ENCODE measurements at regions of chr17 and their contacts with region 1.

Region 1: DNA sequence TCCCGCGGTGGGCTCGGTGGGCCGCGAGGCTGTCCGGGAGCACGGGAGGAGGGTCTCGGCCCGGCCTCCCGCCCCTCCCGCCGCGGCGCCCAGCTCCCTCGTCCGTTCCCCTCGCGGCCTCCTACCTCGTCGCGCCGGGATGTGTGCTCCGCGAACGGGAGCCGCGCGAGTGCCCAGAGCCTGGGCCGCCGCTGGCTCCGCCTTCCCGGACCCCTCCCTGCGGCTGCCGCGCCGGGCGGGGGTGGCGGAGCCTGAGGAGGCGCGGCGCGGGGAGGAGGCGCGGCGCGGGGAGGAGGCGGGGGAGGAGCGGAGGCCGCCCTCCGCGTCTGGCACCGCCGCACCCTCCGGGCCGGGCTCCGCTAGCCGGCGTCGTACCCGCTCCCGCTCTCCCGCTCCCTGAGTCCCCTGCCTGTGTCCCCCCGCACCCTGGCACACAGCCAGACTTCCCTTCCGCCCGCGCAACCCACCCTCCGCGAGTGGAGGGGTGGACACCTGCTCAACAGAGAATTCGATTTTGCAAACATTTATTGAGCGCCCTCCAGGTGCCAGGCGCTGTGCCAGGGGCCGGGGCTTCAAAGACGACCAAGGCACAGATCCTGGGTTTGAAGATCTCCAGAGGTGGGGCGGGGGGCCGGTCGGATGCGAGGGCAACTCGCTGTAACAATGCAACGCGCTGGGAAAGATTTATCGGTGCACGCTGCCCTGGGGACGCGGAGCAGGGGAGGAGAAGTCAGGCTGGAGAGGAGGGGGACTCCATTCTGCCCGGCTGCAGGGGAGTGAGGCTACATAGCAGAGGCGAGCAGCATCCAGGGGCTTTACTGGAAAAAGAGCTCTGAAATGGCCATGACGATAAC is at the start of gene MPP3:
- DNase-seq: peak; percentile 76 to 93 (median 90)
- ATAC-seq: peak; percentile 88 to 90
- H3K4me3 ChIP-seq: peak within 1 kb of the TSS; percentile 78
- H3K27ac ChIP-seq: peak within 1 kb of the TSS; percentile 63
- H3K4me1 ChIP-seq: no peaks in the 10 kb centered on the region
- H3K27me3 ChIP-seq: no peaks in the 10 kb centered on the region
- total RNA-seq, gene MPP3: 42.1 to 77.4 (median 61.5) TPM

Region 2: DNA sequence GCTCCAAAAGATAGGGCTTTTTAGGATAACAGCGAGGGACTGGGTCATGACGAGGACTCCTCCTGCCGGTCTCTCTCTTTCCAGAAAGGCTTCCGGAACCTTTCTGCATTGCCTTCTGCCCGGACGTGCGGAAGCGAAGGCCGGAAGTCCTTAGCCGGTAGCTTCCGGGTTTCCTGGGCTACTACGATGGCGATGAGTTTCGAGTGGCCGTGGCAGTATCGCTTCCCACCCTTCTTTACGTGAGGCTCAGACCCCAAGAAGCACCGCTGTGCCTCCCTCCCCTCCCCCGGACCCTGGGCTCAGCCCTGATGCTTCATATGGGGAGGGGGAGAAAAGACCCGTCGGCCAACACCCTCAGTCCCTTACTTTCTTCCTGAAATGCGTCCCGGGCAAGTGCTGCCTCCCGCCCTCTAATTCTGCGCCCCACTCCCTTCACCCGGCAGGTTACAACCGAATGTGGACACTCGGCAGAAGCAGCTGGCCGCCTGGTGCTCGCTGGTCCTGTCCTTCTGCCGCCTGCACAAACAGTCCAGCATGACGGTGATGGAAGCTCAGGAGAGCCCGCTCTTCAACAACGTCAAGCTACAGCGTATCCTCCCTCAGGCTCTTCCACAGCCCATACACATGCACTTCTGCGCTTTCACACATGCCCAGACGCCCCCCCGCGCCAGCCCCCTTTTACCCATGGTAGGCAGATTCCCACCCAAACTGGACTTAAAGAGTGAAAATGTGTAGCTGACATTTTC is 1059.7 kb before region 1 on chr17 and contains the start of gene VPS25:
- intact Hi-C with region 1: no loop called
- DNase-seq: peak; percentile 78 to 91 (median 89)
- ATAC-seq: peak; percentile 94 to 96
- H3K4me3 ChIP-seq: peak within 1 kb of the TSS; percentile 63
- H3K27ac ChIP-seq: peak within 1 kb of the TSS; percentile 36
- H3K4me1 ChIP-seq: peaks cover 2% of the 10 kb centered on the region
- H3K27me3 ChIP-seq: no peaks in the 10 kb centered on the region
- total RNA-seq, gene VPS25: 32.0 to 37.7 (median 33.0) TPM

Region 3: GRCh38 chr17:43778337-43779144 is 54.7 kb before region 1 on chr17 and contains the start of gene DUSP3:
- intact Hi-C with region 1: loop called in 1 of 4 experiments (anchors 5 kb)
- DNase-seq: peak; percentile 96 to 98 (median 98)
- ATAC-seq: peak; percentile 93 to 94
- H3K4me3 ChIP-seq: peak within 1 kb of the TSS; percentile 94
- H3K27ac ChIP-seq: peak within 1 kb of the TSS; percentile 99
- H3K4me1 ChIP-seq: peaks cover 13% of the 10 kb centered on the region
- H3K27me3 ChIP-seq: no peaks in the 10 kb centered on the region
- total RNA-seq, gene DUSP3: 144 to 180 (median 154) TPM

Region 4: DNA sequence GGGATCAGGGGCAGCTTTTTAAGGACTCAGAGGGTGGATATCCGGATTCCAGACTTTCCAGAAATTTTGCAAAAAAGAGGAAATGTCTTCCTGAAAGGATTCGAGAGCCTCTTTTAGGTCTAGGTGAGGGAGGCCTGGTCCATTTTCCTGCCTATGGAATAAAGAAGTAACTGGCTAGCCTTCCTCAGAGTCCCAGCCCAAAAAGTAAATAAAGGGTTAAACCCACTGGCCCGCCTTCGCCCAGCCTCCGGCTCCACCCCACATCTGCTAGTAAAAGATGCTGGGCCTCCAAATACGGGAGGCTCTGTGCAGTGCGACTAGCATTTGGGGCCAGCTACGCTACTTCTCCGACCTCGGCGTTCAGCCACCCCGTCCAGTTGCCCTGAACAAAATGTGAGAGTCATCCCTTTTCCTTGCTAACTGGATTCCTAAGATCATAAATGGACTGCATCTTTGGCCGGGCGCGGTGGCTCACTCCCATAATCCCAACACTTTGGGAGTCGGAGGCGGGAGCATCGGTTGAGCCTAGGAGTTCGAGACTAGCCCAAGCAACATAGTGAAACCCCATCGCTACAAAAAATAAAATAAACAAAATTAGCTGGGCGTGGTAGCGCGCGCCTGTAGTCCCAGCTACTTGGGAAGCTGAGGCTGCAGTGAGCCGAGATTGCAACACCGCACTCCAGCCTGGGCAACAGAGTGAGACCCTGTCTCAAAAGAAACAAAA is 75.0 kb after region 1 on chr17:
- intact Hi-C with region 1: no loop called
- DNase-seq: peak; percentile 74 to 90 (median 87)
- ATAC-seq: peak; percentile 72 to 76
- H3K4me3 ChIP-seq: peak overlapping the region; percentile 74
- H3K27ac ChIP-seq: peak overlapping the region; percentile 58
- H3K4me1 ChIP-seq: peaks cover 5% of the 10 kb centered on the region
- H3K27me3 ChIP-seq: no peaks in the 10 kb centered on the region